Caco-2 (cell line): ENCODE measurements at regions of chr20 and their contacts with region 1.

Region 1: DNA sequence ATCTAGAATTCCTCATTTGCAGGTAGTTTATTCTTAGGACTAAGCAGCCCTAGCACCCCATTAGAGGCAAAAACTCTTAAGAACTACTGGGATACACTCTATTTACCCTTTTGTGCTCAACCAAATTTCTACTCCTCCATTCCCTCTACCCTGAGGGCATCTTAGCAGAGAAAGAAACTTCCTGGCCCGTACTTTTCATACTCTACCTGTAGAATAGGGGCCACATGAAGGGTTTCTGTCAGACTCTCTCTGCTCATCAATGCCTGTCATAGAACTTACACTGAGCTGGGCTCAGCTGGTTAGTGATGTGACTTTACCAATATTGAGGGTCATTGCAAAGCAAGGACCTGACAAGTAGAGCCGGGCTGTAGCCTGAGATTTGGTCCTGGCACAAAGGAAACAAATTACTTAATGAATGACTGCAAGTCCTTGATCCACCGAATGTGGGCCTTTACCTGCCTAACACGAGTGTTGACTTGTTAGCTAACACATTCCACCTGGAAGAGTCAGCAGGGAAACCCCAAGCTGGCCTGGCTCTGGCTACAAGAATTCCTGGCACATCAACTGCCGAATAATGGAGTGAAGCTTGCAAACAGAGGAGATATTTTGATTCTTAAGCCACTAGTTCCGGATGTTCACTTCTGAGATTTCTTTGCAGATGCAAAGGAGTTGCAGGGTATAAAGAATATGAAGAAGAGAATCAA is 280.5 kb upstream of the JAG1 start:
- DNase-seq: no peak
- H3K4me3 ChIP-seq: no peak overlapping the region
- H3K4me3 Mint-ChIP-seq: no peak overlapping the region
- H3K27ac Mint-ChIP-seq: no peak overlapping the region
- H3K4me1 ChIP-seq: peaks cover 50% of the 10 kb centered on the region
- H3K4me1 Mint-ChIP-seq: peaks cover 31% of the 10 kb centered on the region
- H3K27me3 ChIP-seq: no peaks in the 10 kb centered on the region
- H3K27me3 Mint-ChIP-seq: no peaks in the 10 kb centered on the region
- CTCF ChIP-seq: no peak

Region 2: DNA sequence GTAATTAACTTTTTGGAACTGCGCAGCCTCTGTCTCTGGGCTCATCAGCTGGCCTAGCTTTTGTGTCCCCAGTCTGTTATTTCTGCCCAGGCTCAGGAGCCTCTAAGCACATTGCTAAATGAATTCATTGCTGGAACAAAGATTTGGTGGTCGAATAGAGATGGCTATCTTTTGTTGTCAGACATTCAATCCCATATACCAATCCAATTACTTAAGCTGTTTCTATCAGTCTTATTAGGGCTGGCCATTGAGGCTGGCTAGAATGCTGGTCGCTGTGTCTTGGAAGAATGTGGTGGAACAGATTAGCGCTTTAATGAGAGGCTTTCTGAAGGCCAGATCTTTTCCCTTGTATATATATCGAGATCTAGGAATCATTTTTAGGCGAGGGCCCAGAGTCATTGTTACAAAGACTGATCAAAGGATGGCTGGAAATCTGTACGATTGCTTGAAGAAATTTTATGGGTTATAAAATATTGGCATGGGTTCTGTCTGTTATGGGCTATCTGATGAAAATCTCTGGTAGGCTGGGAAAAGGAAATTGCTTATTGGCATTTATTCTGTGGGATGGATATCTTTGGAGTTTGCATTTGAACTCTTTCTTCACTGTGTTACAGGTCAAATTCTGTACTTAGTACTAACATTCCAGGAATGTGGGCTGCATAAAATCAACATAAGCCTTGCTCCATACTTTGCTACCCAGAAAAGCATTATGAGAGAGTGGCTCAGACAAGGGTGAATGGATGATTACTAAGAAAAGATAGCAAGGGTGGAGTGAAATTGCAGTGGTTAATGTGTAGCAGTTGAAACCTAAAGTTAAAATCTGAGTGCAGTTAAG is 245.7 kb before region 1 on chr20:
- CTCF ChIA-PET with region 1: no interaction called
- POLR2A ChIA-PET with region 1: no interaction called
- intact Hi-C with region 1: loop called (anchors 5 kb)
- DNase-seq: peak in 1 of 2 experiments; percentile 55
- H3K4me3 ChIP-seq: no peak overlapping the region
- H3K4me3 Mint-ChIP-seq: peak overlapping the region; percentile 31
- H3K27ac Mint-ChIP-seq: peak overlapping the region; percentile 58
- H3K4me1 ChIP-seq: peaks cover 42% of the 10 kb centered on the region
- H3K4me1 Mint-ChIP-seq: peaks cover 30% of the 10 kb centered on the region
- H3K27me3 ChIP-seq: no peaks in the 10 kb centered on the region
- H3K27me3 Mint-ChIP-seq: no peaks in the 10 kb centered on the region
- CTCF ChIP-seq: no peak

Region 3: DNA sequence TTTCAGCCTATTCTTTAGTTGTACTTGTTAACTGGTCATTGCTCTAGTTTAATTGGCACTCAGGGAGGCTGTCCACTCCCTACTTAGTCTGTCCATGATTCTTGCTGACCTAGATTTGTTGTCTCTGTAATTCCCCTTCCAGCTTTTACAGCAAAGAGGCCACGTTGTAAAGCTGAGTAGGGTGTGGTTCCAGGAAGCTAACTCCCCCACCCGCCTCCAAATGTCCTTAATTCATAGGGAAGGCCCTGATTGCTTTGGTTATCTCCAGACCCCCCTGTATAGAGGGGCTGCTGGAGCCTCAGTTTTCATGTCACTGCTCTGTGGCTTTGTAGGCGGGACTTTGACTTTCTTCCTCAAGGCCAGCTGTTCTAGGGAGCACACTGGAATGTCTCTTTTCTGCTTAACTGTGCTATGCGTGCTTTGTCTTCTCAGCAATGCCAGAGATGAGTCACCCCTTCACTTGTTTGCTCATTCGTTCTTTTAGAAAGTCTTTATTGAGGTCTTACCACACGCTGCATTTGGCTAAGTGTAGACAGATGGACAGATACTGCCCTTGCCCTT is 105.4 kb before region 1 on chr20:
- CTCF ChIA-PET with region 1: no interaction called
- POLR2A ChIA-PET with region 1: no interaction called
- intact Hi-C with region 1: loop called (anchors 2 kb)
- DNase-seq: peak; percentile 69 to 79
- H3K4me3 ChIP-seq: no peak overlapping the region
- H3K4me3 Mint-ChIP-seq: peak overlapping the region; percentile 9
- H3K27ac Mint-ChIP-seq: peak overlapping the region; percentile 66
- H3K4me1 ChIP-seq: peaks cover 20% of the 10 kb centered on the region
- H3K4me1 Mint-ChIP-seq: peaks cover 39% of the 10 kb centered on the region
- H3K27me3 ChIP-seq: no peaks in the 10 kb centered on the region
- H3K27me3 Mint-ChIP-seq: no peaks in the 10 kb centered on the region
- CTCF ChIP-seq: no peak

Region 4: DNA sequence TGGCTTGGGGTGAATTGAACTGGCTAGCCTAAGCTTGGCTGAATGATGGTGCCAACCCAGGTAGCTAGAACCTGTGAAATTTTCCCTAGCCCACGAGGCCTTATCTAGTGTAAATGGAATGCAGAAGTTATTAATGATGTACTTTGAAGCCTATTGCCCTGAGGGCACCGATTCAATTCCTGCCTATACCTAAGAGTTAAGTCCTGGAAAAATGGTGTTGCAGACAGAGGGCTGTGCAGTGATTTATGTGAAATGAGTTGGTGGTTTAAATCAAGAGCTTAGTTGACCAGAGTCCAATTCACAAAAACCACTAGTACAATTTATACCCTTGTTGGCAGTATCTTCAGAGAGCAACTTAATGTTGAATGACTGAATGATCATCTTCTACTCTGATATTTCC is 93.3 kb after region 1 on chr20:
- CTCF ChIA-PET with region 1: no interaction called
- POLR2A ChIA-PET with region 1: no interaction called
- intact Hi-C with region 1: loop called (anchors 1 kb)
- DNase-seq: peak; percentile 41 to 74
- H3K4me3 ChIP-seq: no peak overlapping the region
- H3K4me3 Mint-ChIP-seq: no peak overlapping the region
- H3K27ac Mint-ChIP-seq: no peak overlapping the region
- H3K4me1 ChIP-seq: peaks cover 50% of the 10 kb centered on the region
- H3K4me1 Mint-ChIP-seq: peaks cover 23% of the 10 kb centered on the region
- H3K27me3 ChIP-seq: no peaks in the 10 kb centered on the region
- H3K27me3 Mint-ChIP-seq: no peaks in the 10 kb centered on the region
- CTCF ChIP-seq: no peak

Region 5: DNA sequence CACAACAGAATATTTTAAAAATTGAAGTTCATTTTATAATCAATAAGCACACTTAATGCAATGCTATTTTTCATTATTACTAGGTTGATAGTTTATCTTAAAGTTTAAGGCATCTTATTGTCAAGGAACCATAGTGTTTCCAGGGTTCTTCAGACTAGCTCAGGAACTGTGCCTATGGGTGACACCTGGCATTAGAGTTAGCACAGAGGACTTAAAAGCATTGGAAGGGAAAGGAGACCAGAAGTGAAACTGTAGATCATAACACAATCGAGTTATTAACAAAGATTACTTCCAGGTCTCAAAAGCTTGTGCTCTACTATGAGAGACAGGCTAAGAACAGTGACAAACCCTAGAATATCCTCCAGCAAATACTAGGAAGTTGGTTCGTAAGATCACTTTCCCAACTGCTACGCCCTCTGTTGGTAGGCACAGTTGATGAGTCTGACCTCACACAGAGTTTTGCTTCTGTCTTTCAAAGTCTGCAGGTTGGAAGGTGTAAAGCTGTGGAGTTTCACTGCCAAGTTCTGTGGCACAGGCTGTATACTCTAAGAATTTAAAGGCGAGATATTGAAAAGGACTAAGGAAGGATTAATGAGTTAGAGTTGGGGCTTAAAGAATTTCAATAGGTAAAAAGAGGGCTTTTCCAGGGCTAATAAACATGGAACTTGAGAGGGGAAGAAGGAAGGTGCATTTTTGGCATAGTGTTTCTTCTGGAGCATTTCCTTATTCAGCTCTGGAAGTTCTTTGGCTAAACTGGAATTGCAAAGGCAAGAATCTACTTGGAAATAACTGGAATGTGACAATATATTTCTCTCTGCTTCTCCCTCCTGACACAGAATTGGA is 250.9 kb after region 1 on chr20:
- CTCF ChIA-PET with region 1: no interaction called
- POLR2A ChIA-PET with region 1: no interaction called
- intact Hi-C with region 1: loop called (anchors 5 kb)
- DNase-seq: peak; percentile 75 to 76
- H3K4me3 ChIP-seq: no peak overlapping the region
- H3K4me3 Mint-ChIP-seq: no peak overlapping the region
- H3K27ac Mint-ChIP-seq: peak overlapping the region; percentile 10
- H3K4me1 ChIP-seq: peaks cover 38% of the 10 kb centered on the region
- H3K4me1 Mint-ChIP-seq: peaks cover 20% of the 10 kb centered on the region
- H3K27me3 ChIP-seq: no peaks in the 10 kb centered on the region
- H3K27me3 Mint-ChIP-seq: no peaks in the 10 kb centered on the region
- CTCF ChIP-seq: peak; percentile 75 to 94